IMR-90 (cell line): ENCODE measurements at regions of chr6 and their contacts with region 1.

Region 1: DNA sequence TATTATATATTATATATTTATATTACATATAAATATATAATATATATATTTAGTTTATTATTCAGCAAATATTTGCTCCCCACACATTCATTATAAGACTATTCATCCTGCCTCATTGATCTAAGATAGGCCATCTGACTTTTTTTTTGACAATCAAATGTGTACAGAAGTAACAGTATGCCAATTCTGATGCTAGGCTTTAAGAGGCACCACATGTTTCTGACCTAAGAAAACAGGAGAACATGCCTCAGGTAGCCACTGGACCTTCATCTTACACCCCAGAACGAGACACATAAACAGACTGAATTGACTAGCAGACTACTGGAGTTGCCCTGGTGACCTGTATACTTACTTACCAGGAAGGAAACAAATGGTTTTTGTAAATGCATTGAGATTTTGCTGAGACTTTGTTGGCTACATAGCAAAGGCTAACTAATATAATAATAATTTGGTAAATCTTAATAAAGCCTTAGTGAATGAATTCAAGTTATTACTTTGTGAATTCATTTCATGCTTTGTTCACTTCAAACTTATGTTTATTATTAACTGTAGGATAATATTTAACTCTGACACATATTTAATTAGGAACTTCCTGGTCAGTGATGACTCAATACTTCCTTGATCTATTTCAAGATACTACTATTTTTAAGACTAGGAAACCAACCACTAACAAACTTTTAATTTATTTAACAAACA is 13.4 kb upstream of the MYO6 start:
- DNase-seq: peak; percentile 28
- ATAC-seq: no peak
- H3K4me3 ChIP-seq: no peak overlapping the region
- H3K27ac ChIP-seq: no peak overlapping the region
- H3K4me1 ChIP-seq: peaks cover 2% of the 10 kb centered on the region; the same call in 1 of the 2 replicates
- H3K27me3 ChIP-seq: no peaks in the 10 kb centered on the region
- CTCF ChIP-seq: no peak
- POLR2A ChIP-seq: no peak
- RAD21 ChIP-seq: no peak

Region 2: DNA sequence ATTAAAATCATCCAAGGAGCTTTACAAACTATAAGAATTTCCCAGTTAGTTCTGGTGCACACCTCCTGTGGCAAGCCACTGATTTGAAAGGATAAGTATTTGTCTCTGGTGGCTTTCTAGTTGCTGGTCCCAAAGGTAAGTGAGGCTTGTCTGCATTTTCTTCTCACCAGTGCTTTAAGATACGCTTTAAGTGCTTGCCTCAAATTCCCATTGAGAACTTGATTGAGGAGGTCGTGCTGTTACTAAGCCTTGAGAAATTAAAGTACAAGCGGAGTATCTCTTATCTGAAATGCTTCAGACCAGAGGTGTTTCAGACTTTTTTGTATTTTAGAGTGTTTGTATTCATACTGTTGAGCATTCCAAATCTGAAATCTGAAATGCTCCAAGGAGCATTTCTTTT is 16.5 kb before region 1 on chr6:
- CTCF ChIA-PET with region 1: interaction called, 3 read pairs
- POLR2A ChIA-PET with region 1: no interaction called
- dilution Hi-C with region 1: no loop called
- in situ Hi-C with region 1: no loop called
- intact Hi-C with region 1: loop called (anchors 2 kb)
- DNase-seq: no peak
- ATAC-seq: no peak
- H3K4me3 ChIP-seq: no peak overlapping the region
- H3K27ac ChIP-seq: no peak overlapping the region
- H3K4me1 ChIP-seq: no peaks in the 10 kb centered on the region
- H3K27me3 ChIP-seq: no peaks in the 10 kb centered on the region
- CTCF ChIP-seq: no peak
- POLR2A ChIP-seq: no peak
- RAD21 ChIP-seq: no peak